CD8-positive, alpha-beta T cell (primary cell): ENCODE measurements at regions of chr2 and their contacts with region 1.

Region 1: GRCh38 chr2:71130113-71130904 is at the starts of genes MCEE and MPHOSPH10:
- DNase-seq: peak; percentile 81 to 92 (median 90)
- ATAC-seq: peak; percentile 90
- H3K4me3 ChIP-seq: peak within 1 kb of the TSS; percentile 75 to 96
- H3K4me3 Mint-ChIP-seq: no peak within 1 kb of the TSS
- H3K27ac ChIP-seq: peak within 1 kb of the TSS; percentile 87 to 89
- H3K27ac Mint-ChIP-seq: no peak within 1 kb of the TSS
- H3K4me1 ChIP-seq: peaks cover 27% of the 10 kb centered on the region
- H3K4me1 Mint-ChIP-seq: peaks cover 19% of the 10 kb centered on the region
- H3K27me3 ChIP-seq: no peaks in the 10 kb centered on the region
- H3K27me3 Mint-ChIP-seq: no peaks in the 10 kb centered on the region
- CTCF ChIP-seq: no peak
- total RNA-seq, gene MCEE: 7.1 to 7.3 TPM
- total RNA-seq, gene MPHOSPH10: 51.4 to 57.9 TPM

Region 2: DNA sequence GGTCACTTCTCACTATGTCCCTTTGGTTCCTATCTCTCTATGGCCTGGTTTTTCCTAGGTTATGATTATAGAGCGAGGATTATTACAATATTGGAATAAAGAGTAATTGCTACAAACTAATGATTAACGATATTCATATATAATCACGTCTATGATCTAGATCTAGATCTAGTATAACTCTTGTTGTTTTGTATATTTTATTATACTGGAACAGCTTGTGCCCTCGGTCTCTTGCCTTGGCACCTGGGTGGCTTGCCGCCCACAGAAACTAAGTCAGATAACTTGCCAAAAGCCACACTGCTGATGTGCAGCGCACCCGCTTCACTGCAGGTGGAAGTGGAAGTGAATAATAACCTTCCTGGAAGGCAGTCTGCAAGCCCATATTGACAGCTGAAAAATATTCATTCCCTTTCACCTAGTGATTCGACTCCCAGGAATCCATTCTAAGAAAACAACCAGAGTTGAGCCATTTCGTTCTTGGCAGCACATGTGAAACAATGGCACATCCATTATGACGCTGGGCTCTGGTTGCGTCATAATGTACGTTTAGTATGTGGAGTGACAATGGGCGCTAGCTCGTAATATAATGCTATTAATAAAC is 152.6 kb before region 1 on chr2:
- CTCF ChIA-PET with region 1: no interaction called
- POLR2A ChIA-PET with region 1: no interaction called
- intact Hi-C with region 1: loop called (anchors 5 kb)
- DNase-seq: peak in 2 of 9 experiments; percentile 49 to 55
- ATAC-seq: peak; percentile 27
- H3K4me3 ChIP-seq: peak overlapping the region; percentile 59 to 61
- H3K4me3 Mint-ChIP-seq: peak overlapping the region; percentile 85
- H3K27ac ChIP-seq: peak overlapping the region; percentile 44 to 73
- H3K27ac Mint-ChIP-seq: peak overlapping the region; percentile 89
- H3K4me1 ChIP-seq: peaks cover 17% of the 10 kb centered on the region
- H3K4me1 Mint-ChIP-seq: peaks cover 20% of the 10 kb centered on the region
- H3K27me3 ChIP-seq: no peaks in the 10 kb centered on the region
- H3K27me3 Mint-ChIP-seq: no peaks in the 10 kb centered on the region
- CTCF ChIP-seq: peak; percentile 4

Region 3: DNA sequence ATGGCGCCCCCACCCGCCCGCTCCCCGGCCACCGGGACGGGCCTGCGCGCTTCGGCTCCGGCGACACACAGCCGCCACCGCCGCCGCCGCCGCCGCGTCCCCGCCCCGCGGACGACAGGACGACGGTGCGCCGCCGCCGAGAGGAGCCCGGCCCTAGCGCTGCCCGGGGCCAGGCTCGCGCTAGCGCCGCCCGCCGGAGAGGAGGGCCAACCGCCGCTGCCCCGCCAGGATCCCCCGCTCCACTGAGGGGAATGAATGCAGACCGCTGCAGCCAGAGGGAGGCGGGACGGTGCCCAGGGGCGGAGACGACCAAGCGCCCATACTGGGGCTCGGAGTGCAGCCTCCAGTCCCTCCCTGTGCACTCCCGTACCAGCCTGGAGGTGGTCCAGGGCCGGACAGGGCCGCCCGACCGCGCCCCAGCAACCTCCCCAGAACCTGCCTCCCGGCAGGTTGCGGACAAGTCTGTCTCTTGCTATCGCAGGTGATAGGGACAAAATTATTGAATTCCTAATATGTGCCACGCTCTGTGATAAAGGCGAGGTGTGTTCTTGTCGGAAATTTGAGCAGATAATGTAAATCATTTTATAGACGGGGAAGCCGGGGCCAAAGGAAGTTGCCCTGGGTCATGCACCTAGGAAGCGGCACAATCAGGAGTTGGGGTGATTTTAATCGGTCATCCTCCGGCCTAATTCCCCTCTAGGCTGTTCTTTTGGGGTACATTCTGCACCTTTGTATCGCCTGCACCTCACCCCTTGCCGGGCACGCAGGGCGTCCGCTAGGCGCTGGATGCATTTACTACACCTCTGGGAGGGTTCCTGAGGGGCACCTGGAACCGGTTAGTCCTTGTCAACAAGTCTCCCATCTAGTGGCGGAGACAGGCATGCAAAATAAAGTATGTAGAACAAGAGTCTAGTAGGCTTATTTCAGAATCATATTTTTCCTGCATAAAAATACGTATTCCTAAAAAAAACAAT is 135.3 kb before region 1 on chr2 and contains the start of gene TEX261:
- CTCF ChIA-PET with region 1: no interaction called
- POLR2A ChIA-PET with region 1: no interaction called
- intact Hi-C with region 1: loop called in 1 of 2 experiments (anchors 1 kb)
- DNase-seq: peak; percentile 82 to 94 (median 89)
- ATAC-seq: peak; percentile 95
- H3K4me3 ChIP-seq: peak within 1 kb of the TSS; percentile 82 to 95
- H3K4me3 Mint-ChIP-seq: peak within 1 kb of the TSS; percentile 97
- H3K27ac ChIP-seq: peak within 1 kb of the TSS; percentile 69 to 74
- H3K27ac Mint-ChIP-seq: peak within 1 kb of the TSS; percentile 96
- H3K4me1 ChIP-seq: peaks cover 21% of the 10 kb centered on the region
- H3K4me1 Mint-ChIP-seq: peaks cover 34% of the 10 kb centered on the region
- H3K27me3 ChIP-seq: no peaks in the 10 kb centered on the region
- H3K27me3 Mint-ChIP-seq: no peaks in the 10 kb centered on the region
- CTCF ChIP-seq: peak; percentile 49
- total RNA-seq, gene TEX261: 23.1 to 28.1 TPM

Region 4: GRCh38 chr2:71068218-71069035 is 61.9 kb before region 1 on chr2 and contains the start of gene NAGK:
- CTCF ChIA-PET with region 1: interaction called, 6 read pairs
- POLR2A ChIA-PET with region 1: interaction called, 59 read pairs
- intact Hi-C with region 1: loop called (anchors 1 kb)
- DNase-seq: peak; percentile 95 to 99 (median 98)
- ATAC-seq: peak; percentile 82
- H3K4me3 ChIP-seq: peak within 1 kb of the TSS; percentile 77 to 87
- H3K4me3 Mint-ChIP-seq: peak within 1 kb of the TSS; percentile 95
- H3K27ac ChIP-seq: peak within 1 kb of the TSS; percentile 86 to 99
- H3K27ac Mint-ChIP-seq: peak within 1 kb of the TSS; percentile 99
- H3K4me1 ChIP-seq: peaks cover 43% of the 10 kb centered on the region
- H3K4me1 Mint-ChIP-seq: peaks cover 63% of the 10 kb centered on the region
- H3K27me3 ChIP-seq: no peaks in the 10 kb centered on the region
- H3K27me3 Mint-ChIP-seq: no peaks in the 10 kb centered on the region
- CTCF ChIP-seq: no peak
- total RNA-seq, gene NAGK: 58.9 to 67.7 TPM

Region 5: DNA sequence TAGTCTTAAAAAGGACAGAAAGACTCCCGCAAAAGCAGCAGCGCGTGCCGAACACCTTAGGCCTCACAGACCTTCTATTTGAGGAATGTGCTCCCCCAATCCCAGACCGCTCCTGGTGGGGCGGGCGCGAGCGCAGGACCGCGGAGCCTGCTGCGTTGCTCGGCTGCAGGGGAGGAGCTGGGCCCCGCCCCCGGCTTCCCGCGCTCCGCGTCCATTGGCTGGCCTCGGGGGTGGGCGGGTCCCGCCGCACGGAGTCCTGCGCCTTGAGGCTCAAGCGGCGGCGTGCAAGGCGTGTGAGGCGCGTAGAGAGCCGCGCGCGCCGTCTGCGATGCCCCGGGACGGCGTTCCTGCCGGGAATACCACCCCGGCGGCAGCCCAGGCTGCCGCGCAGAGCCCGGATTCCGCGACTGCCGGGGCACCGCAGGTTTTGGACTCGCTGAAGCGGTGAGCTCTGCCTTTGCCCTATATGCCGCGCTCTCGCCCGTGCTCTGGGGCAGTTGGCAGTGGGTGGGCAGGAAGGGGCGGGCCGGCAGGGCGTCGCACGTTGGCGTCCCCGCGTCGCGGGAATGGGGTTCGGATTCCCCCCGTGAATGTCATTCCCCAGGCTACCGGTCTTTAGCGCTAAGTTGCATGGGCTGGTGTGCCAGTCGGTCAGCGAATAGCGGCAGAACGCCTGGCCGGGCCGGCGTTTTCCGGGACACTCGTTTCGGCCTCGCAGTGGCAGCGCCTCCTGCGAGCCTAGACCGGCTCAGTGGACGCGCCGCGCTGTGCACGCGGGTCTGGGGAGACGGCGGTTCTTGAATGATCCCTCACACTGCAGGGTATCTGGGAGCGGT is 146.2 kb after region 1 on chr2:
- CTCF ChIA-PET with region 1: no interaction called
- POLR2A ChIA-PET with region 1: no interaction called
- intact Hi-C with region 1: loop called in 1 of 2 experiments (anchors 1 kb)
- DNase-seq: peak; percentile 58 to 88 (median 77)
- ATAC-seq: peak; percentile 99
- H3K4me3 ChIP-seq: peak overlapping the region; percentile 55 to 80
- H3K4me3 Mint-ChIP-seq: peak overlapping the region; percentile 76
- H3K27ac ChIP-seq: no peak overlapping the region
- H3K27ac Mint-ChIP-seq: no peak overlapping the region
- H3K4me1 ChIP-seq: peaks cover 16% of the 10 kb centered on the region
- H3K4me1 Mint-ChIP-seq: peaks cover 16% of the 10 kb centered on the region
- H3K27me3 ChIP-seq: peaks cover 18 to 28% of the 10 kb centered on the region in 2 experiments
- H3K27me3 Mint-ChIP-seq: peaks cover 70% of the 10 kb centered on the region
- CTCF ChIP-seq: no peak

Region 6: DNA sequence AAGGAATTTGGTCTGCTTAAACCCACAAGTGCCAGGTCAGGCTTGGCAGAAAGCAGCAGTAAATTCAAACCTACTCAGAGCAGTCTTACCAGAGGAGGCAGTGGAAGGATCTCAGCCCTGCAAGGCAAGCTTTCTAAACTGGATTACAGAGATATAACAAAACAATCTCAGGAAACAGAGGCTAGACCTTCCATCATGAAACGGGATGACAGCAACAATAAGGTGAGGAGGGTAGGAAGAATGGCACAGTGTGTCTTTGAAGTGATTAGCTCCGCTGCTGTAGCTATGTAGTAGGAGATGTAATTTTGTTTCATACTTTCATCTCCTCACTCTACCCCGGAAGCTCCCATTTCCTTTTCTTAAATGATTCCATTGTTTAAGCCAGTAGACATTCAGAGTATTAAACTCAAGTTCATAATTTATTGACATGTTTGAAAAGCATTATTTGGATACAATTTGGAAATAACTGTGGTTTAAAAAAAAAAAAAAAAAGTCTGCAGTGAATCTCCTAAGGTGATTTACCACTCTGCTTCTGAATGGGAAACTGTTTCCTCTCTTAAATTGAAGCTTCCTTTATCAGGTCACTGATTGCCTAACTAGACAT is 293.6 kb after region 1 on chr2:
- CTCF ChIA-PET with region 1: no interaction called
- POLR2A ChIA-PET with region 1: no interaction called
- intact Hi-C with region 1: no loop called
- DNase-seq: no peak
- ATAC-seq: no peak
- H3K4me3 ChIP-seq: no peak overlapping the region
- H3K4me3 Mint-ChIP-seq: no peak overlapping the region
- H3K27ac ChIP-seq: no peak overlapping the region
- H3K27ac Mint-ChIP-seq: no peak overlapping the region
- H3K4me1 ChIP-seq: no peaks in the 10 kb centered on the region
- H3K4me1 Mint-ChIP-seq: peaks cover 15% of the 10 kb centered on the region
- H3K27me3 ChIP-seq: no peaks in the 10 kb centered on the region
- H3K27me3 Mint-ChIP-seq: no peaks in the 10 kb centered on the region
- CTCF ChIP-seq: no peak

Region 7: DNA sequence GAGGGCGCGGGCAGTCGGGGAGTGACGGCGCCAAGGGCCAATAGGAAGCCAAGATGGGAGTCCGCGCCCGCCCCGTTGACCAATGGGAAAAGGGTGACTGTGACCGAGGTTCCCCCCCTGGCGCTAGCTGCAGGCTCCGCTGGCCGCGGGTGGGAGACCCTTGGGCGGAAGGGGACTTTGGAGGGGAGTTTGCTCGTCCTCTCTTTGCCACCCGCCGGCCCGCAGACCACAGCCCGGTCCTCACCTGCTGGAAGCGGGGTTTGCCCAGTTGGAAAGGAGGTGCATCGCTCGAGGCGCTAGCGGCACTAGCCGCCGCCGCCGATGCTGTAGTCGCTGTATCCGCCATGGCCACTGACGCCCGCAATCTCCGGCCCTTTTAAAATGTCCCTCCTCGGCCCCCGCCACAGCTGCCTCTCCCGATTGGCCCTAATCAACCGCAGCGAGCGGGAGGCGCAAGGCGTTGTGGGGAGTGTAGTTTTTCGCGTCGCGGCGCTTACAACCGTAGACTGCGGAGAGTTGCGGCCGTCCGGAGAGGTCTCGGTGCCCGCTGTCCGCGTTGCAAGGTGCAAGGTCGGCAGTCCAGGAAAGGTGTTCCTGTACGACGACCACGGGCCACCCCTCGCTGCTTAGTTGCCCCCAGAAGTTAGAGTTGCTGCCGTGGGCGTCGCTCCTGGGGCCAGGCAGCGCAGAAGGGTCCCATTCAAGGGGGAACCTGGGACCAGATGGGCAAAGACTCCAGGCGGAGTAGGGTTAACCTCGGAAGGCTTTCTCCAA is 1941.2 kb after region 1 on chr2 and contains the start of gene SFXN5:
- CTCF ChIA-PET with region 1: no interaction called
- POLR2A ChIA-PET with region 1: no interaction called
- intact Hi-C with region 1: loop called in 1 of 2 experiments (anchors 5 kb)
- DNase-seq: peak; percentile 89 to 98 (median 95)
- ATAC-seq: peak; percentile 82
- H3K4me3 ChIP-seq: peak within 1 kb of the TSS; percentile 94 to 95
- H3K4me3 Mint-ChIP-seq: peak within 1 kb of the TSS; percentile 96
- H3K27ac ChIP-seq: peak within 1 kb of the TSS; percentile 73 to 86
- H3K27ac Mint-ChIP-seq: peak within 1 kb of the TSS; percentile 92
- H3K4me1 ChIP-seq: peaks cover 13% of the 10 kb centered on the region
- H3K4me1 Mint-ChIP-seq: peaks cover 41% of the 10 kb centered on the region
- H3K27me3 ChIP-seq: no peaks in the 10 kb centered on the region
- H3K27me3 Mint-ChIP-seq: no peaks in the 10 kb centered on the region
- CTCF ChIP-seq: no peak
- total RNA-seq, gene SFXN5: 6.1 to 9.3 TPM